ENCODE measurements at regions of chr7 and their contacts with region 1.

Region 1: DNA sequence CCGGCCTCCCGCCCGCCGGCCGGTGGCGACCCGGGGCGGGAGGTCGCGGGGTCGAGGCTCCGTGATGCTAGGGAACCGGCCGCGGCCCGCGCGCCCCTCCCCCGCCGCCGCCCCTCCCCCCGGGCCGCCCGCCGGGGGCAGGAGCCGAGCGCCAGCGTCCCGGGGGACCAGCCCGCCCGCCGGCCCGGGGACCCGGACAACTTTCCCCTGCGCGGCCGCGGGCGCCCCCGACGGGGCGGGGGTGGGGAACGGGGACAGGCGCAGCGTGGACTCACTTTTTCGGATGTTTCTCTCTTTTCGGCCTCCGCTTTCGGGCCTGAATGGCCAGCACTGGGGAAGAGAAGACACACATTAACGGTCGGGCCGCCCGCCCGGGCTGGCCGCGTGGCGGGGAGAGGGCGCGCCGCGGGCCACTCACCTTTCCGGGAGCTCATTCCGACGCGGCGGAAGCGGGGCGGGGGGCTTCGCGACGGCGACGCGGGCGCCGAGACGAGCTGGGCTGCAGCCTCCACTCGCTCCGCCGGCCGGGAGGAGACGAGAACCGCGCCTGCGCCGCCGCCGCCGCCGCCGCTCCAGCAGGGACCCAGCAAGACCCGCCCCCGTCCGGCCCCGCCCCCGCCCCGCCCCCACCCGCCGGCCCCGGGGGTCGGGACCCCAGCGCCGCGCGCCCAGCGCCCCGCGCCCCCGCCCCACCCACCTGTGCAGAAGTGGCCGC is at the start of gene SRPK2:
- DNase-seq: peak; percentile 54 to 88 (median 74)
- ATAC-seq: peak; percentile 84
- H3K4me3 ChIP-seq: peak within 1 kb of the TSS; percentile 63
- H3K4me3 Mint-ChIP-seq: peak within 1 kb of the TSS; percentile 100
- H3K27ac ChIP-seq: peak within 1 kb of the TSS in 1 of 2 donors; percentile 31
- H3K27ac Mint-ChIP-seq: peak within 1 kb of the TSS; percentile 93
- H3K4me1 ChIP-seq: peaks cover 23% of the 10 kb centered on the region
- H3K4me1 Mint-ChIP-seq: peaks cover 51% of the 10 kb centered on the region
- H3K27me3 ChIP-seq: no peaks in the 10 kb centered on the region
- H3K27me3 Mint-ChIP-seq: no peaks in the 10 kb centered on the region
- CTCF ChIP-seq: no peak
- total RNA-seq, gene SRPK2: 39.9 to 40.9 TPM

Region 2: DNA sequence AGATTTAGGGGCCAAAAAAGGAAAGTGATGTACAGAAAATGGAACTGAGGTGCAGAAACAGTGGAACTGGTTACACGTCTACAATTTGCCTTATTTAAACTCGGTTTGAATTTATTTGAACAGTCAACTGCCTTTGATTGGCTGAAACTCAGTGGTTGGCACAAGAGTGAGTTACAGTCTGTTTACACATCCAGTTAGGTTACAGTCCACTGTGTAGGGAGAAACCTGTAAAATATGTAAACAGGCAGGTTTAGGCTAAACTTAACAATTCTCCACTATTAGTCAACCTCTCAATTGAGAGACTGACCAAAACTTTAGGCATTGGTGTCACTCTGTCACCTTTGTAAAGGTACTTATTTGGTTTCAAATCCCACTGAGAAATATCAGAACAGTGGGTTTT is 1358.8 kb before region 1 on chr7:
- CTCF ChIA-PET with region 1: no interaction called
- POLR2A ChIA-PET with region 1: no interaction called
- intact Hi-C with region 1: no loop called
- DNase-seq: no peak
- ATAC-seq: no peak
- H3K4me3 ChIP-seq: no peak overlapping the region
- H3K4me3 Mint-ChIP-seq: no peak overlapping the region
- H3K27ac ChIP-seq: no peak overlapping the region
- H3K27ac Mint-ChIP-seq: no peak overlapping the region
- H3K4me1 ChIP-seq: no peaks in the 10 kb centered on the region
- H3K4me1 Mint-ChIP-seq: no peaks in the 10 kb centered on the region
- H3K27me3 ChIP-seq: no peaks in the 10 kb centered on the region
- H3K27me3 Mint-ChIP-seq: peaks cover 10% of the 10 kb centered on the region
- CTCF ChIP-seq: no peak

Region 3: DNA sequence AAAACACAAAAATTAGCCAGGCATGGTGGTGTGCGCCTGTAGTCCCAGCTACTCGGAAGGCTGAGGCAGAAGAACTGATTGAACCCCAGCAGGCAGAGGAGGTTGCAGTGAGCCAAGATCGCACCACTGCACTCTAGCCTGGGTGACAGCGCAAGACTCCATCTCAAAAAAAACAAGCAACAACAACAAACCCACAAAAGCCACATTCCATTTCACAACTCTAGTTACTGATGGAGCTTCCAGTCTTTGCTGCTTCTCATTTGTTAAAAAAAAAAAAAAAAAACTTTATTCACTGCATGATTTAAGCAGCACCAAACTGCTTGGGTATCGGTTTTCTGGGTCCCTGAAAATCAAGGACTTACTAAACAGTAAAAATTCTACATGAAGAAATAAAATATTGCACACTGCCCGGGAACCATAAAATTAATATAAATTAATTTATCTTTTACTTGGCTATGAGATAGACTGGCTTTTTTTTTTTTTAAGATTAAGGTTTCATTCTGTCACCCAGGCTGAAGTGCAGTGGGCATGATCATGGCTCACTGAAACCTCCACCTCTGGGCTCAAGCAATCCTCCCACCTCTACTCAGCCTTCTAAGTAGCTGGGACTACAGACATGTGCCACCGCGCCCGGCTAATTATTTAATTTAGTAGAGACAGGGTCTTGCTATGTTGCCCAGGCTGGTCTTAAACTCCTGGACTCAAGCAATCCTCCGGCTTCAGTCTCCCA is 41.8 kb before region 1 on chr7:
- CTCF ChIA-PET with region 1: no interaction called
- POLR2A ChIA-PET with region 1: interaction called, 54 read pairs
- intact Hi-C with region 1: loop called (anchors 5 kb)
- DNase-seq: peak in 3 of 14 experiments; percentile 54 to 81 (median 59)
- ATAC-seq: peak; percentile 66
- H3K4me3 ChIP-seq: no peak overlapping the region
- H3K4me3 Mint-ChIP-seq: peak overlapping the region; percentile 75
- H3K27ac ChIP-seq: peak overlapping the region in 1 of 2 donors; percentile 9
- H3K27ac Mint-ChIP-seq: peak overlapping the region; percentile 79
- H3K4me1 ChIP-seq: peaks cover 70% of the 10 kb centered on the region
- H3K4me1 Mint-ChIP-seq: peaks cover 74% of the 10 kb centered on the region
- H3K27me3 ChIP-seq: no peaks in the 10 kb centered on the region
- H3K27me3 Mint-ChIP-seq: no peaks in the 10 kb centered on the region
- CTCF ChIP-seq: no peak

Region 4: GRCh38 chr7:105352018-105352612 is 36.4 kb before region 1 on chr7:
- CTCF ChIA-PET with region 1: no interaction called
- POLR2A ChIA-PET with region 1: interaction called, 54 read pairs
- intact Hi-C with region 1: loop called (anchors 5 kb)
- DNase-seq: peak; percentile 15 to 93 (median 48)
- ATAC-seq: peak; percentile 97
- H3K4me3 ChIP-seq: peak overlapping the region; percentile 23
- H3K4me3 Mint-ChIP-seq: peak overlapping the region; percentile 87
- H3K27ac ChIP-seq: peak overlapping the region; percentile 14 to 19
- H3K27ac Mint-ChIP-seq: peak overlapping the region; percentile 89
- H3K4me1 ChIP-seq: peaks cover 85% of the 10 kb centered on the region
- H3K4me1 Mint-ChIP-seq: peaks cover 77% of the 10 kb centered on the region
- H3K27me3 ChIP-seq: no peaks in the 10 kb centered on the region
- H3K27me3 Mint-ChIP-seq: no peaks in the 10 kb centered on the region
- CTCF ChIP-seq: no peak

Region 5: DNA sequence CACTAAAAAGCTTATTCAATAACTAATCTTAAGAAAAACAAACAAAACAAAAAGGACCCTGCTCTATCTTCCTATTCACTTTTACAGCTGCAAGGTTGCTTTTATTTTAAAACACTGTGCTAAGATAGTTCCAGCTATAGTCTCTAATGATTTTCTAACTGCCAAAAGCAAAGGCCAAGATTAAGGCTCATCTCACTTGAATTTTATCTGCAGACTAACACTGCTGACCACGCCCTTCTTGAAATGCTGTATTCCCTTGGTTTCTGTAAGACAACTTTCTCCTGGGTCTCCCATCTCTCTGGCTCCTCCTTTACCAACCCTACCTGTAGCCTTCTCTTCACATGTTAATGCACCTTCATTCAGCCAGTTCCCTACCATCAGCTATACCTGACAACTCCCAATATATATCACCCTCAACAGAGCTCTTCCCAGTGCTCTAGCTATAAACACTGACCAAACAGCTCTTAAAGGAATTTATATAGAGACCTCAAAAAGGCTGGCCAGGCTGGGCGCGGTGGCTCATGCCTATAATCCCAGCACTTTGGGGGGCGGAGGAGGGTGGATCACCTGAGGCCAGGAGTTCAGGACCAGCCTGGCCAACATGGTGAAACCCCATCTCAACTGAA is 11.5 kb before region 1 on chr7:
- CTCF ChIA-PET with region 1: no interaction called
- POLR2A ChIA-PET with region 1: interaction called, 10 read pairs
- intact Hi-C with region 1: no loop called
- DNase-seq: no peak
- ATAC-seq: no peak
- H3K4me3 ChIP-seq: no peak overlapping the region
- H3K4me3 Mint-ChIP-seq: no peak overlapping the region
- H3K27ac ChIP-seq: no peak overlapping the region
- H3K27ac Mint-ChIP-seq: peak overlapping the region; percentile 2
- H3K4me1 ChIP-seq: peaks cover 24% of the 10 kb centered on the region
- H3K4me1 Mint-ChIP-seq: peaks cover 64% of the 10 kb centered on the region
- H3K27me3 ChIP-seq: no peaks in the 10 kb centered on the region
- H3K27me3 Mint-ChIP-seq: no peaks in the 10 kb centered on the region
- CTCF ChIP-seq: no peak

Region 6: GRCh38 chr7:105522062-105522936 is 133.8 kb after region 1 on chr7 and contains the start of gene PUS7:
- CTCF ChIA-PET with region 1: no interaction called
- POLR2A ChIA-PET with region 1: no interaction called
- intact Hi-C with region 1: loop called in 1 of 2 experiments (anchors 5 kb)
- DNase-seq: peak; percentile 61 to 92 (median 76)
- ATAC-seq: peak; percentile 94
- H3K4me3 ChIP-seq: peak within 1 kb of the TSS; percentile 57
- H3K4me3 Mint-ChIP-seq: peak within 1 kb of the TSS; percentile 98
- H3K27ac ChIP-seq: peak within 1 kb of the TSS; percentile 21 to 67
- H3K27ac Mint-ChIP-seq: peak within 1 kb of the TSS; percentile 85
- H3K4me1 ChIP-seq: peaks cover 18% of the 10 kb centered on the region
- H3K4me1 Mint-ChIP-seq: peaks cover 15% of the 10 kb centered on the region
- H3K27me3 ChIP-seq: no peaks in the 10 kb centered on the region
- H3K27me3 Mint-ChIP-seq: no peaks in the 10 kb centered on the region
- CTCF ChIP-seq: no peak
- total RNA-seq, gene PUS7: 2.7 TPM